AG04449 (cell line): ENCODE measurements at regions of chr1 and their contacts with region 1.

Region 1: DNA sequence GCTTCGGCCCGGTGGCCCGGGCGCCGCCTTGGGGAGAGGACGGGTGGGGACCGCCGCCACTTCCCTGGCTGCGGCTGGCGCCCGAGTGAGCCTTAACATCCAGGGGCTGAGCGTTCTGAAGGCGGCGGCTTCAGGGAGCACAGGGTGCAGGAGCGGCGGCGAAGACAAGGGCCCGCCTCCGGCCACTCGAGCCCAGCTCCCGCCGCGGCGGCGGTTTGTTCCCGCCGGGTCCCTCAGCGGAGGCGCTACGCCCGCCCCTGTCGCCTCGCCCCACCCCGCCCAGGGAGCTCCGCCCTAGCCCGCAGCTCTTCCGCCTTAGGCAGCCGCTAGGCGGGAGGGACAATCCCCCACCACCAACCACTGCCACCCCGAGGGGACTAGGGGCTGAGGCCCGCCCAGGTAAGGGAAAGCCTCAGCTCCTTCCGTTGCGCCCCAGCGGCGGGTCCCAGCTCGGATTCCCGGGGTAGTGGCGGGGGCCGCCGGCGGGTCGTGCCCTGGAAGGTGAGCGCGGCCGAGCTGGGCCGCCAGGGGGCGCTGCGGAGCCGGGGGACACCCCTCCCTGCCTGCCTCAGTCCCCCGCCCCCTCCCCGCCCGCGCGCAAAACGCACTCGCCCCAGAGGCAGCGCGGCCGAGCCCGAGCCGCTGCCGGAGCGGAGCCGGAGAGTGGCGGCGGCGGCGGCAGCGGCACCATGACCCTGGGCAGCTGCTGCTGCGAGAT is at the start of gene FOXD2:
- DNase-seq: no peak
- H3K4me3 ChIP-seq: peak within 1 kb of the TSS; percentile 79
- CTCF ChIP-seq: peak; percentile 57

Region 2: GRCh38 chr1:47348246-47348645 is 89.4 kb before region 1 on chr1:
- CTCF ChIA-PET with region 1: interaction called, 10 read pairs
- POLR2A ChIA-PET with region 1: no interaction called
- DNase-seq: no peak
- H3K4me3 ChIP-seq: no peak overlapping the region
- CTCF ChIP-seq: no peak

Region 3: DNA sequence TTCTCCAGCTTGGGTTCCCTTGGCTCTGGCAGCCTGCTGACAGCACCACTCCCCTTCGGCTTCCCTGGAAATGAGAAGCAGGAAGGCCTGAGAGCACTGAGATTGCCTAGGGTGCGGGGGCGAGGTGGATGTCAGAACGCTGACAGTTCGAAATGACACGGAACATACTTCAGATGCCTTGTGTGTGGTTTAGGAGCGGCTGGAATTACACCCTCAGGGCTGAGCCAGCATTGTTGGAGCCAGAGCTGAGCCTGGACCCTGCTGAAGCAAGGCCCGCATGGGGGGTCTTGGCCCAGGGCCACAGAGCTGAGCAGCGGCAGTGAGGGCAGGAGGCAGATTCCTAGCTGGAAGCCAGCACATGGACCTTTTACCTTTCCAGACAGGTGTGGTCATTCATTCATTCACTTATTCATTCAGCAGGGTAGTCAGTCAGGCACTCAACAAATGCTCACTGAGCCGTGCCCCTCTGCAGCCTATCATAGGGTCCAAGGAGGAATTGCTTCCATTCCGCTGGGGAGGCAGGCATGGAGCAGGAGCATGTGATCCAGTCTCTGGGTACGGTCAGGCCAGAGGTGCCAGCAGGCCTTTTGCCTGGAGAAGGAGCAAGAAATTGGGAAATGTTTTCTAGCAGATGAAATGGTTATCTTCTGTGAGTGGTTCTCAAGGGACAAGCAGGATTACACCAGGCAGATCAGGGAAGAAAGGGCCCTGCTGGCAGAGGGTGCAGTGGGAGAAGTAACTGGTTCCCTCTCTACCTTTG is 28.1 kb before region 1 on chr1:
- CTCF ChIA-PET with region 1: interaction called, 87 read pairs
- POLR2A ChIA-PET with region 1: interaction called, 3 read pairs
- DNase-seq: peak; percentile 41
- H3K4me3 ChIP-seq: no peak overlapping the region
- CTCF ChIP-seq: no peak

Region 4: DNA sequence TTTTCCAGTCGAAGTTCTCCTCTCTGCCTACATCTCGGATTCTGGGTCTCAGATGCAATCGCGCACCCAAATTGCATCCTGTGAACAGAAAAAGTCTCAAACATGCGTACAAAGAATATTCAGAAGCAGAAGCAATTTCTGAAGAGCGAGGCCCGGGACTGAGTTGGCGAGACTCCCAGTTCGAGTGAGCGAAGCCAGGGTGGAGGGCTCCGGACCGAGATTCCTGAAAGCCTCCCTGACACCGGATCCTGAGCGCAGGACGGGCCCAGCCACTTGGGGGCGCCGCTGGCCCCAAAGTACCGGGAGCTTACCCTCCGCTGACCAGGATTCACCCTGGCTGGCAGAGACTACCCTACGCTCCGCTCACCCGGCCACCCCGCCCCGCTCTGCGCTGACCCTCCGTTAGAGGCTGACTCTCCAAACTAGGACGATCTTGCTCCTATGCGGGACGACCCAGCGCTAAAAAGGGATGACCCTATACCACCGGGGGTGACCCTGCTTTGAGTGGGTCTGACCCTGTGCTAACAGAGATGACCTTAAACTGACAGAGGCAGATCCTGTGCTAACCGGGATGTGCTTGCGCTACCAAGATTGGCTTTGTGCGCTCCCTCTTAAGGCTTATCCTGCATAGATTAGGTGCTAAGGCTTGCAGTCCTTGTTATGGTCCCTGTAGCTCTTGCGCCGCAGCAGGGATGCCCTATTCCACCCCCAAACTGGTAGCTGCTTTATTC is 12.4 kb after region 1 on chr1:
- CTCF ChIA-PET with region 1: interaction called, 57 read pairs
- POLR2A ChIA-PET with region 1: no interaction called
- DNase-seq: no peak
- H3K4me3 ChIP-seq: no peak overlapping the region
- CTCF ChIP-seq: peak; percentile 43

Region 5: DNA sequence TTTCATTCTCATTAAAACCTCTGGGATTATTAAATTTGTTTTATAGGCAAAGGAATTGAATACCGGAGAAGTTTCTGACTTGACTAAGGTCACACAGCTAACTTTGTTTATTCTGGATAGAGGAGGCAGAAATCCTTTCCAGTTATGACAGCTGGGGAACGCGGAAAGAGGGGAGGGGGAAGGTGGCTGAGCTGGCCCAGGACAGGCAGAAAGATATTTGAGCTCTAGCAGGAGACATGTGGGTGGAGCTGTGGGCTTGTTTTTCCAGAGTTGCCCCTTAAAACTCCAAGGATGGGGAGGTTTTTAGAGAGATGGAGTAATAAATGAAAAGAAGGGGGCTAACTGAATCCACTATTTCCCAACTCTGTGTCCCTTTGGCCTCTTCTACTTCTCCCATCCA is 28.0 kb after region 1 on chr1:
- CTCF ChIA-PET with region 1: interaction called, 20 read pairs
- POLR2A ChIA-PET with region 1: no interaction called
- DNase-seq: no peak
- H3K4me3 ChIP-seq: no peak overlapping the region
- CTCF ChIP-seq: no peak

Region 6: GRCh38 chr1:47637111-47637685 is 199.6 kb after region 1 on chr1:
- CTCF ChIA-PET with region 1: no interaction called
- POLR2A ChIA-PET with region 1: no interaction called
- DNase-seq: no peak
- H3K4me3 ChIP-seq: no peak overlapping the region
- CTCF ChIP-seq: no peak

Region 7: GRCh38 chr1:47710329-47711071 is 272.9 kb after region 1 on chr1:
- CTCF ChIA-PET with region 1: interaction called, 470 read pairs
- POLR2A ChIA-PET with region 1: no interaction called
- DNase-seq: no peak
- H3K4me3 ChIP-seq: no peak overlapping the region
- CTCF ChIP-seq: peak; percentile 99

Region 8: DNA sequence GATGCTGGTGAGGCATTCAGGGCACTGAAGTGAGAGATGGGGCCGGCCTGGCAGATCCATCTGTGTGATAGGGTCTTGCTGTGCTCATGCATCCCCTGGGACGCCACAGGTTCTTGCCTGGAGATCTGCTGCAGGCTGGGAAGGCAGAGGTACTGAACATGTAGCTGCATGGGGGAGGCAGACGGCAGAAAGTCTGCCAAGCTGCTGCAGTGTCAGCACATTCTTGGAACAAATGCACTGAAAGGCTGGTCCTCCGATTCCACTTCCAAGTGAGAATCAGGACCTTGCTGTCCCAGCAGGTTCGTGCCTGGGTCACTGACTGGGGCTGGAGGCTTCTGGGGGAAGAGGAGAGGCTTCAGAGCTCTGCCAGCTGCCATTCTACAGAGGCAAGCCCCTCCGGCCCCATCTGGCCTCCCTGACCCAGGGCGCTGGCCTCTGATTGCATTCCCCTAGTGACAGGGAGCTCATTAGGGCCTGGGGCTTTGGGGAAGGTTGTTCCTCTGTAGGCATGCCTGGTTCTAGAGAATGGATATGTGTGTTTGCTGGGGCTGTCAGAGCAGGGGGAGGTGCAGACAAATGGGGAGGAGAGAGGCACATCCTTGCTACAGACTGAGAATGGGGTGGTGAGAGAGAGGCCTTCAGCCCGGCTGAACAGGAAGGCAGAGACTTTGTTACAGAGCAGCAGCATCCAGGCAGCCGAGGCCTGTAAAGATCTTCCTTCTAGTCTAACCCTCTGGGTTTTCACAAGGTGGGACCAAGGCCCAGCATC is 385.6 kb after region 1 on chr1:
- CTCF ChIA-PET with region 1: no interaction called
- POLR2A ChIA-PET with region 1: no interaction called
- DNase-seq: no peak
- H3K4me3 ChIP-seq: no peak overlapping the region
- CTCF ChIP-seq: no peak